Psoas muscle (tissue), 8 donors: ENCODE measurements at regions of chr4 and their contacts with region 1.

Region 1: GRCh38 chr4:16289897-16290554 is 63.8 kb upstream of the TAPT1 start:
- DNase-seq: no peak
- ATAC-seq: no peak
- H3K4me3 ChIP-seq: no peak overlapping the region
- H3K27ac ChIP-seq: no peak overlapping the region
- H3K4me1 ChIP-seq: no peaks in the 10 kb centered on the region
- H3K27me3 ChIP-seq: no peaks in the 10 kb centered on the region
- CTCF ChIP-seq: peak; percentile 72

Region 2: DNA sequence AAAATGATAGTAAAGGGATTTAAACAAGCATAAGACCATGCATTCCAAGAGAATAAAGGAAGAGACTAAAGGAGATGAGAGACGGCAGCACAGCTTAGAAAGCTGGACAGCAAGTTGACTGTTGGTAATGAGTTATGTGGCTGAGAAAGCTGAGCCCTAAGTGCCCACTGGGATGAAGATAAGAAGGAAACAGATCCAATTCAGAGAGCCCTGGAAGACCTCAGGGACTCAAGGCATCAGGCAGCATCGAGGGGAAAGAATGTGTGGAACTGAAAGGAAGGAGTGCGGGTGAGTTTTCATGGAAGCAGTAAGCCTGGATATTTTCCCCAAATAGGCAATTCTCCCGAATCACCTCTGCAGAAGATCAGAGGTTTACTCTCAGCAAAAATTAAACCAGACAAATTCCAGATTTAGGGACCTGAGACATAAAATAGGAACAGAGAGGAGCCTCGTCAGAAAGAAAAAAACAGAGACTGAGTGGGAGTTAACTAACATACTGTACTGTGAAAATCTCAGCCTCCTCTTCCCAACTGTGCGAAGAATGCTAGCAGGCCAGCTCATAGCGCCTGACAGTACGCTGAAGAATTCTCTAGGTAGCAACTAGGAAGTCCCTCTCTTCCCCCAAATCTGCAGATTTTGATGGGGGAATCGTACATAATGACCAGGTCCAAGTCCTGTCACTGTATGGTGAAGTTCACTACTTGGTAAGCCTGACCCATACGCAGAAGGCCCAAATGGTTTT is 124.0 kb after region 1 on chr4:
- intact Hi-C with region 1: no loop called
- DNase-seq: no peak
- ATAC-seq: no peak
- H3K4me3 ChIP-seq: no peak overlapping the region
- H3K27ac ChIP-seq: no peak overlapping the region
- H3K4me1 ChIP-seq: no peaks in the 10 kb centered on the region
- H3K27me3 ChIP-seq: peaks cover 0 to 2% (median 0%) of the 10 kb centered on the region in 3 donors
- CTCF ChIP-seq: no peak

Region 3: DNA sequence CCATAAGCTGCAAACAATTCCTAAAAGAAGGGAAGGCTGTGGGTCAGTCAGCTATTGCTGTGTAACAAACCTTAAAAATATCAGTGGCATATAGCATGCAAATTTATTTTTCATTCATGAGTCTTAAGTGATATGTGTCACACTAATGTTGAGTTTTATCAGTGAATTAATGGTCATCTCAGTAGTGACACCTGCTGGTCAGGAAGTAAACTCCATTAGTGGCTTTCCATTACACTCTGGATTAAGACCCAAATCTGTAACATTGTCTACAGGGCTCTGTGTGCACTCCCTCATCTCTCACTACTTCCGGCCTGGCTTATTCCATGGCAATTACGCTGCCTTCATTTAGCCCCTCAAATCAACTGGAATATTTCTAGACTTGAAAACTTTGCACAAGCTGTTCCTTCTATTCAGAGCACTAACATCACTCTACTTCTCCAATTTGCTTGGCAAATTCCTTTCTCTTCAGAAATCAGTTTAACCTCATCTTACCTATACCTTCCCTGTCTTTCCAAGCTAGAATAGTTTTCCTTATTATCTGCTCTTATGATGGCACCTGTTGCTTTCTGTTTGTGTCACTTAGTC is 153.6 kb after region 1 on chr4:
- intact Hi-C with region 1: loop called (anchors 2 to 10 kb)
- DNase-seq: no peak
- ATAC-seq: no peak
- H3K4me3 ChIP-seq: no peak overlapping the region
- H3K27ac ChIP-seq: no peak overlapping the region
- H3K4me1 ChIP-seq: no peaks in the 10 kb centered on the region
- H3K27me3 ChIP-seq: no peaks in the 10 kb centered on the region
- CTCF ChIP-seq: peak; percentile 52

Region 4: GRCh38 chr4:17324386-17324830 is 1034.4 kb after region 1 on chr4:
- intact Hi-C with region 1: loop called in 1 of 2 experiments (anchors 10 kb)
- DNase-seq: peak in 1 of 2 donors; percentile 16
- ATAC-seq: no peak
- H3K4me3 ChIP-seq: no peak overlapping the region
- H3K27ac ChIP-seq: no peak overlapping the region
- H3K4me1 ChIP-seq: peaks cover 3% of the 10 kb centered on the region
- H3K27me3 ChIP-seq: peaks cover 0 to 2% (median 0%) of the 10 kb centered on the region in 3 donors
- CTCF ChIP-seq: peak; percentile 41

Region 5: DNA sequence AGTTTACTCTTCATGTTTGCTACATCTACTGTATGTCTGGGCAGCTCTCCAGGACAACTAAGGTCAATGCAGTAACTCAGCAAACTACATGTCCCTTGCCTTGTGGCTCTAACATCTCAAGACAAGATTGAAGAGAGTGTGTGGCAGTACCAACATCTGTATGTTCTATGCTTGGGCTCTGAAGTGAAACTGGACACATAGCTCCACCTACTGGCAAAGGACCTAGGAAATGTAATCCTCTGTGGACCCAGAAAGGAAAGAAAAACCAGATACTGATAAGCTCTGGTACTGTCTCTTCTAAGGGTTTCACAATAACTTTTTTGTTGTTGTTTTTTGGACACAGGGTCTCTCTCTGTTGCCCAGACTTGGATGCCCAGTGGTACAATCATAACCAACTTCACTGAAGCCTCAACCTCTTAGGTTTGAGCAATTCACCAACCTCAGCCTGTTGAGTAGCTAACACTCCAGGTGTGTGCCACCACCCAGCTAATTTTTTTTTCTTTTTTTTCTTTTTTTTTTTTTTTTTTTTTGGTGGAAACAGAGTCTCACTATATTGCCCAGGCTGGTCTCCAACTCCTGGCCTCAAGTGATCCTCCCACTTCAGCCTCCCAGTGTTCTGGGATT is 1157.8 kb after region 1 on chr4:
- intact Hi-C with region 1: loop called in 1 of 2 experiments (anchors 2 kb)
- DNase-seq: no peak
- ATAC-seq: peak in 3 of 4 donors; percentile 32 to 61 (median 45)
- H3K4me3 ChIP-seq: no peak overlapping the region
- H3K27ac ChIP-seq: no peak overlapping the region
- H3K4me1 ChIP-seq: no peaks in the 10 kb centered on the region
- H3K27me3 ChIP-seq: no peaks in the 10 kb centered on the region
- CTCF ChIP-seq: peak; percentile 46

Region 6: GRCh38 chr4:17469931-17470649 is 1180.1 kb after region 1 on chr4:
- intact Hi-C with region 1: loop called (anchors 5 to 10 kb)
- DNase-seq: no peak
- ATAC-seq: no peak
- H3K4me3 ChIP-seq: no peak overlapping the region
- H3K27ac ChIP-seq: no peak overlapping the region
- H3K4me1 ChIP-seq: no peaks in the 10 kb centered on the region
- H3K27me3 ChIP-seq: no peaks in the 10 kb centered on the region
- CTCF ChIP-seq: no peak

Region 7: GRCh38 chr4:17475481-17475880 is 1185.5 kb after region 1 on chr4:
- intact Hi-C with region 1: loop called (anchors 5 to 10 kb)
- DNase-seq: no peak
- ATAC-seq: no peak
- H3K4me3 ChIP-seq: no peak overlapping the region
- H3K27ac ChIP-seq: no peak overlapping the region
- H3K4me1 ChIP-seq: no peaks in the 10 kb centered on the region
- H3K27me3 ChIP-seq: no peaks in the 10 kb centered on the region
- CTCF ChIP-seq: no peak